Activated CD8-positive, alpha-beta T cell treated with anti-CD3 and anti-CD28 coated beads, Interleukin-2, amount 10 ng/mL, durations not matched to agents 7 days and 5 days (primary cell): ENCODE measurements at regions of chr3 and their contacts with region 1.

Region 1: DNA sequence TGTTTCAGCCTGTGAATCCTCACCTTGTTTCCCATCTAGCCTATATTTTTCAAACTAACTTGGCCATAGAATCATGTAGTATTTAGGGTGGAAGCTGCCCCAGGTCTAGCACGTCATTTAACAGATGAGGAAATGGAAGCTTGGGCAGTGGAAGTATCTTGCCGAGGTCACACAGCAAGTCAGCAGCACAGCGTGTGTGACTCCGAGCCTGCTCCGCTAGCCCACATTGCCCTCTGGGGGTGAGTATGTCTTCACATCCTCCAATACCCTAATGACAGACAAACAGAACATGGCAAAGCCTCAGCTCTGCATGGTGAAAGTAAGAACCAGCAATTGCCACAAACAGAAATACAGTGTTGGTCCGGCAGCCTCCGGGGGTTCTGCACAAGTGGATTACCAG is 2.2 kb upstream of the CCR5 start:
- DNase-seq: peak; percentile 85
- ATAC-seq: peak; percentile 71
- H3K4me3 Mint-ChIP-seq: peak overlapping the region; percentile 1
- H3K27ac Mint-ChIP-seq: peak overlapping the region; percentile 78
- H3K4me1 Mint-ChIP-seq: peaks cover 70% of the 10 kb centered on the region
- H3K27me3 Mint-ChIP-seq: no peaks in the 10 kb centered on the region

Region 2: GRCh38 chr3:46098319-46098761 is 270.2 kb before region 1 on chr3:
- CTCF ChIA-PET with region 1: interaction called, 55 read pairs
- POLR2A ChIA-PET with region 1: interaction called, 29 read pairs
- DNase-seq: peak; percentile 80
- ATAC-seq: peak; percentile 72
- H3K4me3 Mint-ChIP-seq: peak overlapping the region; percentile 63
- H3K27ac Mint-ChIP-seq: peak overlapping the region; percentile 99
- H3K4me1 Mint-ChIP-seq: peaks cover 92% of the 10 kb centered on the region
- H3K27me3 Mint-ChIP-seq: no peaks in the 10 kb centered on the region

Region 3: GRCh38 chr3:46208167-46208704 is 160.3 kb before region 1 on chr3 and contains the start of gene CCR1:
- CTCF ChIA-PET with region 1: interaction called, 371 read pairs
- POLR2A ChIA-PET with region 1: interaction called, 63 read pairs
- DNase-seq: peak; percentile 85
- ATAC-seq: peak; percentile 69
- H3K4me3 Mint-ChIP-seq: peak within 1 kb of the TSS; percentile 87
- H3K27ac Mint-ChIP-seq: peak within 1 kb of the TSS; percentile 95
- H3K4me1 Mint-ChIP-seq: peaks cover 73% of the 10 kb centered on the region
- H3K27me3 Mint-ChIP-seq: no peaks in the 10 kb centered on the region
- total RNA-seq, gene CCR1: 41.4 to 41.5 TPM

Region 4: DNA sequence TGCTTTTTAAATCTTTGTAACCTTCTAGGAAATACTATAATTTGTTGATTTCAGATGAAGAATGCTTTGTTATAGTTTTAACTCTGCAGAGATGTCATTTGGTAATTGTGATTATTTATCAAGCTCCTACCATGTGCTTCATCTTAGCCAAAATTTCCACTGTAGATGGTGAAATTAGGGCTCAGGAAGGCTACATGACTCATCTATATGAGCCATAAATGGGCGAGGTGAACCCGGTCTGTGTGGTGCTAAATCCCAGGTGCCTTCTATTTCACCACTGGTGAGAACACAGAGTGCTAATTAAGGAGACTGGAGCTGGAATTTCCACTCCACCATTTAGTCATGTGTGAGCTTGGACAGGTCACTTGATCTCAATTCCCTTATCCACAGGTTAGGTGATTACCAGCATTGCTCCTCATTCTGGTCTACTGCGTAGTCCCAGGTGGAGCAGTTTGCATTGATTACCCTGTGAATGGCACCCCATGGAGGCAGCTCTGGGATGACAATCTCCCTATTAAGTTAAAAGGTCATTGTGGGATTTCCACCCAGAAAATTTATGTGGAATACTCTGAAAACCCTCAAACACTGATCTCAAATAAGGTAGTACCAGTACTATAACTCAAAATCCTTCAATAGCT is 129.1 kb before region 1 on chr3:
- CTCF ChIA-PET with region 1: interaction called, 12 read pairs
- POLR2A ChIA-PET with region 1: no interaction called
- DNase-seq: no peak
- ATAC-seq: no peak
- H3K4me3 Mint-ChIP-seq: no peak overlapping the region
- H3K27ac Mint-ChIP-seq: no peak overlapping the region
- H3K4me1 Mint-ChIP-seq: peaks cover 21% of the 10 kb centered on the region
- H3K27me3 Mint-ChIP-seq: peaks cover 39% of the 10 kb centered on the region

Region 5: GRCh38 chr3:46276502-46277099 is 92.0 kb before region 1 on chr3:
- CTCF ChIA-PET with region 1: interaction called, 276 read pairs
- POLR2A ChIA-PET with region 1: interaction called, 29 read pairs
- DNase-seq: peak; percentile 89
- ATAC-seq: peak; percentile 83
- H3K4me3 Mint-ChIP-seq: no peak overlapping the region
- H3K27ac Mint-ChIP-seq: peak overlapping the region; percentile 85
- H3K4me1 Mint-ChIP-seq: peaks cover 64% of the 10 kb centered on the region
- H3K27me3 Mint-ChIP-seq: peaks cover 3% of the 10 kb centered on the region

Region 6: GRCh38 chr3:46297658-46298463 is 70.7 kb before region 1 on chr3:
- CTCF ChIA-PET with region 1: interaction called, 105 read pairs
- POLR2A ChIA-PET with region 1: interaction called, 22 read pairs
- DNase-seq: no peak
- ATAC-seq: no peak
- H3K4me3 Mint-ChIP-seq: no peak overlapping the region
- H3K27ac Mint-ChIP-seq: peak overlapping the region; percentile 92
- H3K4me1 Mint-ChIP-seq: peaks cover 93% of the 10 kb centered on the region
- H3K27me3 Mint-ChIP-seq: no peaks in the 10 kb centered on the region

Region 7: GRCh38 chr3:46423588-46423987 is 55.0 kb after region 1 on chr3:
- CTCF ChIA-PET with region 1: interaction called, 12 read pairs
- POLR2A ChIA-PET with region 1: interaction called, 5 read pairs
- DNase-seq: no peak
- ATAC-seq: no peak
- H3K4me3 Mint-ChIP-seq: no peak overlapping the region
- H3K27ac Mint-ChIP-seq: no peak overlapping the region
- H3K4me1 Mint-ChIP-seq: peaks cover 24% of the 10 kb centered on the region
- H3K27me3 Mint-ChIP-seq: no peaks in the 10 kb centered on the region